HEK293T (cell line): ENCODE measurements at regions of chr1 and their contacts with region 1.

Region 1: DNA sequence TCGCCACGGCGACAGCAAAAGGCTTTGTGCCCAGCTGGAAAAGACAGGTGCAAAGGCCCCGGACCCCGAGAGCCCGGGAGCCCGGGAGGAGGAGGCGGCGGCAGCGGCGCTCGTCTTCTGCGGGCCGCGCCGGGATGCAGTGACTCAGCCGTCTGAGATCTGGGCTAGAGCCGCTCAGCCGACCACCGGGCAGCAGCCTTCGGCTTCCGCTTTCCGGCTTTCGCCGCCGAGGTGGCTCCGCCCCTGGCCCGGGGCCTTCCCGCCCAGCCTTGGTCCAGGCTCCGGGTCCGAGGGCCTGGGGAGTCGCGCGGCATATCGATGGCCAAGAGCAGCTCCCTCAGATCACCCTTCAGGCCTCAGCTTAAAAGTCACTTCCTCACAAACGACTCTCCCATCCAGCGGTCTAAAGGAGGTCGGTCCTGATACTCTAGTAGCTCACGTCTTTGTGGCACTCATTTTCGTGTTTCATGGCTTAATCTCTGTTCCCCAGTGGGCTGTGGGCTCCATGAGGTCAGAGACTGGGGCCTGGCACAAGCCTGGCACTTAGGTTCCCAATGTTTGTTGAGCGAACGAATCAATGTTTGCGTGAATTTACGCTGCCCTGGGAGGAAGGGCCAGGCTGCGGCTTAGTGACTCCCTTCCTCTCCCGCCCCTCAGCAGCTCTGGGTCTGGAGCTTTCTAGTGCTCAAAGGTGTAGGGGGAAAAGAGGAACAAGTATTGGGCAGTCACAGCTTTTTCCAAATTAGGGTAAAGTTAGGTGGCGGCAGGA is at the start of gene PHTF1:
- DNase-seq: peak; percentile 81

Region 2: GRCh38 chr1:113686891-113687618 is 72.5 kb before region 1 on chr1:
- CTCF ChIA-PET with region 1: no interaction called
- POLR2A ChIA-PET with region 1: no interaction called
- DNase-seq: no peak

Region 3: DNA sequence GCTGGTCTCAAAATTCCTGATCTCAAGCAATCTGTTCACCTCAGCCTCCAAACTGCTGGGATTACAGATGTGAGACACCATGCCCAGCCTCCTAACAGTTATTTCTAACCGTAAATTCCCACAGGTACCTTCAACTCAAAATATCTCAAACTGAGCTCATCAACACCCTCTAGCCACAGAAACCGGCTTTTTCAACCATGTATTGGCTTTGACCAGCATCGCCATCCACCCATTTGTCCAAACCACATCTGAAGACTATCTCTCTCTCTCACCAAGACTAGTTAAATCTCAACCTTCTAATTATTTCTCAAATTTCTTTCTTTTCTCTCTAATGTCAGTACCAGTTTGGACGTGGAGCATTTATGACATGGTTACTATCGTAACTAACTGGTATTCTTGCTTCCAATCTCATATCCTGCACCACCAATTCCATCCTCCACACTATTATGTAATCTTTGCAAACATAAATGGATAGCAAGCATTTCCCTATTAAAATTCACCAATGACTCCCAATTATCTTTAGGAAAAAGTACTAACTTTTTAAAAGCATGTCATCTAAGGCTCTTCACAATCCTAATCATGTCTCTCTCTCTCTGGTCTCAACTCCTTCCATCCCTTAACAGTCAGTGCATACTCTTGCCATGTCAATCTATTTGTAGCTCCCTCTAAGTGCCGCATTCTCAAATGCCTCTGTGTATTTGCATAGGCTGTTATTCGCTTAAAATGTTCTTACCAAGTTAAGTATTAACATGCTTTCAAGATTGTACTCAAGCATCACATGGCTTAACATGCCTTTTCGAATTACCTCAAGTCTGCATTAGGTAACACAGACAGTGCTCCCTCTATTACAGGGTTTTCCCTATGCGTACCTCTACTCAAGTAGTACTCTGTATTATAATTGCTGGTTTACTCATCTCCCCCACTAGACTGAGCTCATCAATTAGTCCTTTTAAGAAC is 34.6 kb after region 1 on chr1:
- CTCF ChIA-PET with region 1: no interaction called
- POLR2A ChIA-PET with region 1: no interaction called
- DNase-seq: no peak

Region 4: DNA sequence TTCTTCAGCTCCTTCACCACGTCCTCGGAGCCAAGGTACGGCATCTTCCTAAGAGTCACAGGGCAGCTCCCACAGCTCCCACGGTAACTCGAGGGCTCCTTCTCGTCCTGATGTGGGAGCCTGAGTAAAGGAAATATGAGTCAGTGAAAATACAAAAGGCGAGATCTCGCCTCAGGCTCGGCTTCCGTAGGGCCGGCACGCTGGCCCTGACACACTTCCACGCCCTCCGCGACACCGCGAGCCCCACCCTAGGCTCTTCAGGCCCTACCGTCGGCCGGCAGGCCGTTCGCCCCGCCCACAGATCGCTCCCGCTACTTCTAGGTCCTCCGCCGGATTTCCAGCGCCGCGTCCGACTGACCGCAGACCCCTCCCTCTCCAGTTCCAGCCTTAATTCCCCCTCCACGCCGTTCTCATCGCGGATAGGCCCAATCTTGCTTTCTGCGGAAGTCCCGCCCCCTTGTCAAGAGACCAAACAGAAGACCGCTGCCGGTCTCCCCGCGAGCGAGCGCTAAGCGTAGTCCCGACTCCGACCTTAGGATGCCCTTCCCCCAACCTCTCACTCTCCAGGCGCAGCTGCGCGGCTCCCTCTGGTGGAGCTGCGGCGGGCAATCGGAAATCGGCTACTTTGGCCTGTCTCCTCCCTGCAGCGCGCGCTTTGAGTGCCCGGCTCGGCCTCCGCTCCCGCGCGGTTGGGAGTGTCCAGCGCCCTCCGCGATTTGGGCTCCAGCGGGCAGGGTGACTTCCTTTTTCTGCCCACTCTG is 145.3 kb after region 1 on chr1 and contains the starts of genes AP4B1 and DCLRE1B:
- CTCF ChIA-PET with region 1: interaction called, 5 read pairs
- POLR2A ChIA-PET with region 1: interaction called, 11 read pairs
- DNase-seq: peak; percentile 100